Head of caudate nucleus (tissue), 42 donors: ENCODE measurements at regions of chr6 and their contacts with region 1.

Region 1: DNA sequence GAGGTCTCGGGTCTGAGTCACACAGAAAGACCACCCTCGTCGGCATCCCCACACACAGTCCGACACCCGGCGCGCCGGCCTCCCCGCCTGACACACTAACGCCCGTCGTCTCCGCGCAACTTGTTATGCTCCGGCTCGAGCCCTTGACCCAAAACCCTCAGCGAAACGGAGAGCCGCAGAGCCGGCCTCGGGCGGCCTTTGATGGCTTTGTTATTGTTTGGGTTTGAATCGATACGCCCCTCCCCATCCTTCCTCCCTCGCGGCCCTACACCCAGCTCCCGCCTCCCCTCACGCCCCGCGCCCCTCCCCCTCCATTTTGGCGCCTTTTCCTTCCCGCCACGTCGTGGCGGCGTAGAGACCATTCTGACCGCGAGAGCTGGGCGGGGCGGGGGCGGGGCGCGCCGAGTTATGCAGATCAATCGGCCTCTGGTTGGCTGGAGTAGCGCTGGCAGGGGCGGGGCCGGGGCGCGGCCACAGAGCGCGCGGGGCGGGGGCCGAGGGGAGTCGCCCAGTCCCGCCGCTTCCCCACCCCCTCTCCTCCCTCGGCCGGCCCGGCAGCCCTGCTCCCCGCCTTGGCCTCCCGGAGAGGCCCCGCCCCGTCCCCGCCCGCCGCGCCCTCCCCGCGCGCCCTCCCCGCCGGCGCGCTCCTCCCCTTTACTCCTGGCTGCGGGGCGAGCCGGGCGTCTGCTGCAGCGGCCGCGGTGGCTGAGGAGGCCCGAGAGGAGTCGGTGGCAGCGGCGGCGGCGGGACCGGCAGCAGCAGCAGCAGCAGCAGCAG is at the start of gene PIM1:
- DNase-seq: peak; percentile 96 to 100 (median 99)

Region 2: GRCh38 chr6:36885461-36886401 is 284.0 kb before region 1 on chr6 and contains the start of gene C6orf89:
- intact Hi-C with region 1: loop called (anchors 10 kb)
- DNase-seq: peak; percentile 95 to 100 (median 99)

Region 3: GRCh38 chr6:37051138-37052026 is 118.3 kb before region 1 on chr6:
- intact Hi-C with region 1: loop called (anchors 2 kb)
- DNase-seq: peak; percentile 89 to 98 (median 95)

Region 4: GRCh38 chr6:37102279-37103168 is 67.2 kb before region 1 on chr6:
- intact Hi-C with region 1: loop called (anchors 1 kb)
- DNase-seq: peak; percentile 76 to 96 (median 89)

Region 5: GRCh38 chr6:37115236-37115895 is 54.3 kb before region 1 on chr6:
- intact Hi-C with region 1: no loop called
- DNase-seq: no peak